Gastrocnemius medialis (tissue), 4 donors: ENCODE measurements at regions of chr6 and their contacts with region 1.

Region 1: DNA sequence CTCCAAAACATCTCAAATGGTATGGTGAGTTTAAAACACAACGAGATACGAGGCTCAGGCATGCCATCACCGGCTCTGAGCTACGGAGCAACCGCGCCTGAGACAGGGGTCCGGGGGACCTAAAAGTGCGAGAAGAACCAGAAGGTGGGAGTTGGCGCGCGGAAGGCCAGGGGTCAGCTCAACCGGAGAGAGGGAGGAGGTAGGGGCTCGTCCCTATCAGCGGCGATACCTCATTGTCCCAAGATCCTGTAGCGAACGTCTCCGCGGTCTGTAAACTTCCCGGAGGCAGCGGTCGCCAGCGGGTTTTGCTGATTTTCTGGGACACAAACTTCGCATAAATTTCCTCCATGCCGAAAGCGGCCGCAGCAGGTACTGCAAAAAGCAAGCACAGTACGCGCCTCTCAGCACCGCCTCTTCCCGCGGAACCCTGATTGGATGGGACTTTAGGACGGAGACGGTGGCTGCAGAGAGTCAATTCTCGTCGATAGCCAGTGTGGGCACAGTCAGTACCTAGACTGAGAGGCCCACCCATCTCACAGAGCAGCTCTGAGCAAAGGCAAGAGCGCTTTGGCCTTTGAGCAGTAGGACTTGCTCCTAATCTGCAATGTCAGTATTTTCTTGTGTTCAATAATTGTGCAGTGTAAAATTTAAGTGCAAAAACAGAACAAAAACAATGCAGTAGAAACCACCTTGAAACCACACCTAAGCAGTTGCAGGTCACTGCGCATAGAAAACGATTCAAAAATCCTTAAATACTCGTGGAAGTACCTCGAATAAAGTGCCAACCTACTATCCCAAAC is at the start of gene NUP43:
- DNase-seq: peak; percentile 84 to 93
- ATAC-seq: peak; percentile 48 to 67
- H3K4me3 ChIP-seq: peak within 1 kb of the TSS; percentile 66 to 93 (median 72)
- H3K27ac ChIP-seq: peak within 1 kb of the TSS; percentile 74 to 86 (median 80)
- H3K4me1 ChIP-seq: peaks cover 16 to 24% of the 10 kb centered on the region in 2 donors
- H3K27me3 ChIP-seq: no peaks in the 10 kb centered on the region
- CTCF ChIP-seq: peak; percentile 70 to 82 (median 77)
- POLR2A ChIP-seq: peak in 1 of 2 donors; percentile 14
- total RNA-seq, gene NUP43: 15.0 to 42.0 (median 16.7) TPM

Region 2: DNA sequence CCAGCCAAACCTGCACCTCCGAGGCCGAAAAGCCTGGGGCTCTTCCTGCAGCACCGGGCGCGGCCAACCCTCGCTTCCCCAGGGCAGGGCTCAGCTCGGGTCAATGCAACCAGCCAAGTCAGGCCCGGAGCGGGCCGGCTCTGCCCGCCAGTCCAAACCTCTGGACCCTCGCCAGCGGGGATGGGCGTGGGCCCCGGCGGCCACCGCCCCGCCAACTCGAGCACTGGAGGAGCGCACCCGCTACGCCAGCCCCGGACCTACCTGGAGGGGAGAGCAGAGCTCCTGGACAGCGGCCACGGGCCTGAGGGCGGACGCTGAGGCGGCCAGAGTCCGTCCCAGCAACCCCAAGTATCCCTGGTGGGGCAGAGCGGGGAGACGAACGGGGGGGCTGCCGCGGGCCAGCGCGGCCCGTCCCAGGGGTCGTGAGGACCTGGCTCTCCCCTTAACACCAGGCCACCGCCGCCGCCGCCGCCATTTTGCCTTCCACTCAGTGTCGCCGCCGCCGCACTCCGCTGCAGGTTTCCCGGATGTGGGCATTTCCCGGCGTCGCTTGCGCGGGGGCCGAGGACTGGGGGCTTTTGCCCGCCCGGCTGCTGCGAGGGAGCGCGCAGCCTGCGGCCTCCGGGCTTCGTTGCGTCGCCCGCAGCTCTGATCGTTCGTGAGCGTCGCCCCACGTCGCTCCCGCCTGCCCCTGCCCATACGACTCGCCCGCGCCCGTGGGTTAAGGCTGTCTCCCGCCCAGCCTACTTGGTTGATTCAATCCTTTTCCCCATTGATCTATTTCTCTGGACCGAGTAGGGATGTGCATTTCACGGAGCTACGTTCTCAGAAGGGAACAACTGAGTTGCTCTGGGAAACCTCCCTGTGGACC is 28.5 kb before region 1 on chr6 and contains the start of gene LATS1:
- in situ Hi-C with region 1: no loop called
- intact Hi-C with region 1: loop called (anchors 2 kb)
- DNase-seq: peak; percentile 76 to 84
- ATAC-seq: peak; percentile 93
- H3K4me3 ChIP-seq: peak within 1 kb of the TSS; percentile 77 to 96 (median 92)
- H3K27ac ChIP-seq: peak within 1 kb of the TSS; percentile 95 to 98 (median 97)
- H3K4me1 ChIP-seq: peaks cover 26 to 33% of the 10 kb centered on the region in 2 donors
- H3K27me3 ChIP-seq: no peaks in the 10 kb centered on the region
- CTCF ChIP-seq: no peak
- POLR2A ChIP-seq: peak; percentile 61 to 71
- total RNA-seq, gene LATS1: 6.3 to 21.8 (median 14.4) TPM

Region 3: GRCh38 chr6:149806127-149806526 is 59.8 kb after region 1 on chr6:
- in situ Hi-C with region 1: no loop called
- intact Hi-C with region 1: no loop called
- DNase-seq: no peak
- ATAC-seq: no peak
- H3K4me3 ChIP-seq: no peak overlapping the region
- H3K27ac ChIP-seq: no peak overlapping the region
- H3K4me1 ChIP-seq: peaks cover 3 to 6% of the 10 kb centered on the region in 2 donors
- H3K27me3 ChIP-seq: no peaks in the 10 kb centered on the region
- CTCF ChIP-seq: no peak
- POLR2A ChIP-seq: no peak